ENCODE measurements at regions of chr4 and their contacts with region 1.

Region 1: DNA sequence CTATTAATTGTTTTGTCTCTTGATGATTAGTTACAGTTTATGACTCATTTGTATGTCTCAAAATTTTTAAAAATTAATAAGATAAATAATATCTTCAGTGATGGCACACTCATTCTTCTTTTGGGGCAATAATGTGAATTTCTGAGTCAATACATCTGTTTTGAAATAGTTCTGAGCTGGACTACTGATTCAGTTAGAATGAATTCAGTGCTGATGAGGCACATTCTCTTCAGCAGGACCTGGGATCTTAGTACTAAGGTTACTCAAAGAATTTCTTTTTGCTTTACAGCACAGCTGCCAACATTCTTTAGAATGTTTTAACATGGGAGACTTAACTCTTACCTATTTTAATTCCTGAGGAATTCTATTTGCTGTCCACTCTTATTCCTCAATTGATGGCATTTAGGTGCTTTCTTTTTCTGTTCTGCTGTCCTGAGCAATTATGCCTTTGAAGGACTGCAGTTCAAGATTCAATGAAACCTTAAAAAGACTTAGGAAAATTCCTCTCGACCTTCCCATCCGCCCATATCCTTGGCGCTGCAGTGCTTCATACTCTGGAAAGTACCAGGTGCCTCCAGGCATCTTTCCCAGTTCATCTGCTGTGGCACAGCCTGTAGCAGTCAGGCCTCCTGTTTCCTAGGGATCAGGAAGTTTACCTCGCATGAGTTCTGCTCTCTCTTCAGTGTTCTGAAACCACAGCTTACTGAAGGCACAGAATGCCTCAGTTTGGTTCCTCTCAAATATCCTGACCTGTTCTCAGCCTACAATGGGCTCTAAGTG is 213.7 kb downstream of the FSTL5 start:
- DNase-seq: no peak
- ATAC-seq: no peak
- H3K4me3 ChIP-seq: no peak overlapping the region
- H3K27ac ChIP-seq: no peak overlapping the region
- H3K4me1 ChIP-seq: no peaks in the 10 kb centered on the region
- H3K27me3 ChIP-seq: no peaks in the 10 kb centered on the region
- CTCF ChIP-seq: no peak

Region 2: DNA sequence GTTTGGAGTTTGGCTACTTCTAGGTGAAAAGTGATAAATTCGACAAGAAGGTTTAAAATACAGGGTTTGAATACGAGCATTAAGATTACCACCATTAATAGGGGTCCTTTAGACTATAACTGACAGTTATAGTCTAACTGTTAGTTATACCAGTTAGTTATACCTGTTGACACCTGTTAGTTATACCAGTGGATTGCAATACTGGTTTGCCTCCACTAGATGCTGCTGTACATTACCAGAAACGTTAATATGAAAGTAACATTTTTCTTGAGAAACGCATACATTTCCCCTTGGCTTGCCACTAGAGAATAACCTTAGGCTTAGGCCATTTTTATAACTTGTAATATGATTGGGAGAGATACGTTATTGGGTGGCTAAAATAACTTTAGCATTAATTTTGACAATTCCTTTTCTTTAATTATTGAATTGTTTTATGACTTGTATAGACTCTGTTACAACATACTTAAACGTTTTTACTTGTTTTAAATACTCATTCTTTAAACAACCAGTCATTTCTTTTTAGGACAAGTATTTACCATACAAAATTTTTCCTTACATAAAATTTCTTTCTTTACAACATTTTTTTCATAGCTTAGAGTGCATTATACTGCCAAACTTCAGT is 697.5 kb before region 1 on chr4:
- CTCF ChIA-PET with region 1: no interaction called
- POLR2A ChIA-PET with region 1: no interaction called
- intact Hi-C with region 1: loop called (anchors 10 kb)
- DNase-seq: peak; percentile 60
- ATAC-seq: peak; percentile 42
- H3K4me3 ChIP-seq: no peak overlapping the region
- H3K27ac ChIP-seq: no peak overlapping the region
- H3K4me1 ChIP-seq: no peaks in the 10 kb centered on the region; the same call in 1 of the 2 replicates
- H3K27me3 ChIP-seq: no peaks in the 10 kb centered on the region
- CTCF ChIP-seq: peak; percentile 80

Region 3: GRCh38 chr4:161320377-161320776 is 629.8 kb before region 1 on chr4:
- CTCF ChIA-PET with region 1: no interaction called
- POLR2A ChIA-PET with region 1: no interaction called
- intact Hi-C with region 1: loop called (anchors 1 kb)
- DNase-seq: peak; percentile 56
- ATAC-seq: peak; percentile 62
- H3K4me3 ChIP-seq: no peak overlapping the region
- H3K27ac ChIP-seq: no peak overlapping the region
- H3K4me1 ChIP-seq: no peaks in the 10 kb centered on the region
- H3K27me3 ChIP-seq: no peaks in the 10 kb centered on the region
- CTCF ChIP-seq: peak; percentile 67

Region 4: GRCh38 chr4:161581262-161582230 is 368.6 kb before region 1 on chr4:
- CTCF ChIA-PET with region 1: no interaction called
- POLR2A ChIA-PET with region 1: no interaction called
- intact Hi-C with region 1: no loop called
- DNase-seq: no peak
- ATAC-seq: no peak
- H3K4me3 ChIP-seq: no peak overlapping the region
- H3K27ac ChIP-seq: no peak overlapping the region
- H3K4me1 ChIP-seq: peaks cover 5% of the 10 kb centered on the region; the same call in 1 of the 2 replicates
- H3K27me3 ChIP-seq: no peaks in the 10 kb centered on the region
- CTCF ChIP-seq: no peak

Region 5: DNA sequence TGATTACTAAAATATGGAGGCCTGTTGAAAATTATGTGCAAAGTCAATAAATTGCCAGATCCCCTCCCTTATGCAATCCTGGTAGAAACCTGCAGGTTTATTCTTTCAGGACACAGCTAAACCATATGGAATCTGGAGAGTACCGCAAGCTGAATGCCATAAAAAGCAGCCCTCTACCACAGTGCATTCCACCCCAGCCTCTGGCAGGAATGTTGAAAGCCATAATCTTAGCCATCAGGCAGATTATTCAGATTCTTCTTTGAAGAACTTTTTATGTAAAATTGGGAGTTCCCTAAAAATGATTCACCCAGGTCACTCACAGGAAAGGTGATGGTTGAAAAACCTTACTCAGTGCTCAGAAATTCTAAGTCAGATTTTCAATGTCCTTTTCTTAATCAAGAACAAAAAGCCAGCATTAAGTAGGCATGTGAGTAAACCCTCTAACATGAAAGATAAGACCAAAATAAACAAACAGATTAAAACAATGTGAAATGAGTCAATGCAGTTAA is 13.5 kb before region 1 on chr4:
- CTCF ChIA-PET with region 1: no interaction called
- POLR2A ChIA-PET with region 1: no interaction called
- intact Hi-C with region 1: loop called (anchors 1 kb)
- DNase-seq: peak; percentile 91
- ATAC-seq: peak; percentile 99
- H3K4me3 ChIP-seq: no peak overlapping the region
- H3K27ac ChIP-seq: peak overlapping the region; percentile 64
- H3K4me1 ChIP-seq: peaks cover 26% of the 10 kb centered on the region
- H3K27me3 ChIP-seq: no peaks in the 10 kb centered on the region
- CTCF ChIP-seq: no peak

Region 6: DNA sequence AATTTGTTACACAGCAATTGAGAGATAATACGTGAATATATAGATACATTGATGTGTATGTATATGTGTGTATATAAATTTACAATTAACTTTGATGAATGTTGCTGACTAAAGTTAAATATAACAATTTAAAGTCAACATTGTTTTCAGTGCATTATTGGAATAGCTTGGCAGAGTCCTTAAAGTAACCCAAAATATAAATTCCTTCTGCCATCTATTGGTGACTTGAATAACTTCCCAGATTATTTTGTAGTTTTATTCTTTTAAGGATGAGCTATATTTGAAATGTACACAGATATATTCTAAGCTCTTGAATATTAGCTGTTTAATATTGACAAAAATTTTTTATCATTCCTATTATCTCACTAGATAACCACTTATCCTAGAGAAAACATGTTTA is 511.8 kb after region 1 on chr4:
- CTCF ChIA-PET with region 1: no interaction called
- POLR2A ChIA-PET with region 1: no interaction called
- intact Hi-C with region 1: loop called (anchors 10 kb)
- DNase-seq: peak; percentile 25
- ATAC-seq: peak; percentile 66
- H3K4me3 ChIP-seq: no peak overlapping the region
- H3K27ac ChIP-seq: no peak overlapping the region
- H3K4me1 ChIP-seq: no peaks in the 10 kb centered on the region
- H3K27me3 ChIP-seq: no peaks in the 10 kb centered on the region
- CTCF ChIP-seq: peak; percentile 50

Measured in PC-3 (cell line).